ENCODE measurements at regions of chr1 and their contacts with region 1.

Region 1: DNA sequence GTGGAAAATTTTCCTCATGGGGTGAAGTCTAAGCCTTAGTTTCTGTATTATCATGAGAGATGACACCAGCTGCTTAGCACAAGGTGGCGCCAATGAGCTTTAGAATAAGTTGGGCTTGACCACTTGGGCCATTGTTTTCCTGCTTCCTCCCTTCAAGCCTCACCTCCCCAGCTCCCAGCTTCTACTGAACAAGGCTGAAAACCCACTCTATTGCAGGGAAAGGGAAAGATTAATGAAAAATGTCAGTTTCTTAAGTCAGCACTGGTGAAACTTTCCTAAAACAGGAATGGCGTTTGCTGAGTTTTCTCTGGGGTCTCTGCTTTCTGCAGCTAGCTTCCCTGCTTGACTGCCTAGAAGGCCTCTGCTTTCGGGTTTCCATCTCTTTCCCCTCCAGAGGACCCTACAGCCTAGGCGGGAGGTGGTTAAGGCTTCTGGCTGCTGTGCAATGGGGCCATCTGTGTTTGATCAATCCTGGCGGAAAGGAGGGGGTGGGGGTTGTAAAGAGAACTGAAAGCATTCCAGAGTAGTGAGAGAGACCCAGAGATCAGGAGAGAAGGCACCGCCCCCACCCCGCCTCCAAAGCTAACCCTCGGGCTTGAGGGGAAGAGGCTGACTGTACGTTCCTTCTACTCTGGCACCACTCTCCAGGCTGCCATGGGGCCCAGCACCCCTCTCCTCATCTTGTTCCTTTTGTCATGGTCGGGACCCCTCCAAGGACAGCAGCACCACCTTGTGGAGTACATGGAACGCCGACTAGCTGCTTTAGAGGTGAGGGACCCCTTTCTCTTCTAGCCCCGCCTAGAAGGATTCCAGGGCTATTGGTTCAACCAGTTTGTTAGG is at the start of gene OLFML3:
- DNase-seq: peak; percentile 89
- H3K4me3 Mint-ChIP-seq: no peak within 1 kb of the TSS
- H3K27ac Mint-ChIP-seq: no peak within 1 kb of the TSS
- H3K4me1 Mint-ChIP-seq: peaks cover 29% of the 10 kb centered on the region
- H3K27me3 Mint-ChIP-seq: no peaks in the 10 kb centered on the region
- CTCF ChIP-seq: peak; percentile 53
- total RNA-seq, gene OLFML3: 0.20 and 0.30 TPM in 2 replicates

Region 2: DNA sequence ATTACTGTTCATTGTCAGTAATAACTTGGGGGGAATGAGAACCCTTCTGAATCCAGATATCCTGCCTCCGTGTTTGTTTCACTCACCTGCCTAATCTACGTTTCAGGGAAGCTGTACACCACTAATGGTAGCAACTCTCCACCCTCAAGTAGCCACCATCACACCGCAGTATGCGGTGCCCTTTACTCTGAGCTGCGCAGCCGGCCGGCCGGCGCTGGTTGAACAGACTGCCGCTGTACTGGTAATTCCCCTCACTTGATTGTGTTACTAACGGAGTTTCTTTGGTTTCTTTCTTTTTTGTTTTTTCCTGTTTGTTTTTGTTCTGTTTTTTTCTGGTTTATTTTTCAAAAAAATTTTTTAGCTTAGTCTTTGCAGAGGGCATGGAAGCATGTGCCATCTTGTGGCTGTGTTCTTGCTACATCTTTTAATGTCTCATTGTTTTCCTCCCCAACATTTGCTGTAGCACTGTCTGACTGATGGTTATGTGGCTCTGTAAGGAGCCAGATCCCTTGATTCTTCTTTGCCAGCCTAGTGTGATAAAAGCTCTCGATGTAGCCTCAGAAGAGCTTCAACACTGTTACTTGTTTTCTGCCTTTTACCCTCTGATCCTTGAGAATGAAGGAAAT is 15.7 kb before region 1 on chr1:
- CTCF ChIA-PET with region 1: interaction called, 22 read pairs
- POLR2A ChIA-PET with region 1: interaction called, 4 read pairs
- intact Hi-C with region 1: no loop called
- DNase-seq: no peak
- H3K4me3 Mint-ChIP-seq: no peak overlapping the region
- H3K27ac Mint-ChIP-seq: no peak overlapping the region
- H3K4me1 Mint-ChIP-seq: no peaks in the 10 kb centered on the region
- H3K27me3 Mint-ChIP-seq: no peaks in the 10 kb centered on the region
- CTCF ChIP-seq: no peak

Region 3: GRCh38 chr1:114033216-114033706 is 54.2 kb after region 1 on chr1:
- CTCF ChIA-PET with region 1: interaction called, 4 read pairs
- POLR2A ChIA-PET with region 1: no interaction called
- intact Hi-C with region 1: loop called (anchors 1 kb)
- DNase-seq: peak; percentile 27
- H3K4me3 Mint-ChIP-seq: no peak overlapping the region
- H3K27ac Mint-ChIP-seq: no peak overlapping the region
- H3K4me1 Mint-ChIP-seq: no peaks in the 10 kb centered on the region
- H3K27me3 Mint-ChIP-seq: no peaks in the 10 kb centered on the region
- CTCF ChIP-seq: peak; percentile 36

Region 4: DNA sequence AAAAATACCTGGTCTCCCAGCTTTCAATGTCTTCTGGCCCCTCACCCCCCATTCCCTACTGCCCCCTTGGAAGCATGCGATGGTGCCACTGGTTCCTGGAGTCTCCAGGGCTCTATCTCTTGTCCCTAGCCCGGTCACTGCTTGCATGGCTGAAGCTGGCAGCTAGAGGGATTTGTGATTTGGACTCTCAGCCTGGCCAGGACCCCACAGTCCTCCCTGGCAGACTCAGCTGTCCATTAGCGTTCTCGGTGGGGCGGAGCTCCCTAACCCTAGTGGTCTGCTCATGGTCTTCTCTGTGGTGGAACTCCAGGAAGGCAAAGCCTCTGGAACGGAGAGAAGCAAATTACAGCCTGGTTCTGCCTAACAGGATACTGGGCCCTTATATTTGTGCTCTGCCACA is 74.5 kb after region 1 on chr1:
- CTCF ChIA-PET with region 1: no interaction called
- POLR2A ChIA-PET with region 1: no interaction called
- intact Hi-C with region 1: no loop called
- DNase-seq: no peak
- H3K4me3 Mint-ChIP-seq: no peak overlapping the region
- H3K27ac Mint-ChIP-seq: no peak overlapping the region
- H3K4me1 Mint-ChIP-seq: no peaks in the 10 kb centered on the region
- H3K27me3 Mint-ChIP-seq: peaks cover 34% of the 10 kb centered on the region
- CTCF ChIP-seq: no peak

Region 5: GRCh38 chr1:114131526-114132220 is 152.6 kb after region 1 on chr1:
- CTCF ChIA-PET with region 1: interaction called, 5 read pairs
- POLR2A ChIA-PET with region 1: interaction called, 3 read pairs
- intact Hi-C with region 1: loop called (anchors 2 kb)
- DNase-seq: peak; percentile 24
- H3K4me3 Mint-ChIP-seq: no peak overlapping the region
- H3K27ac Mint-ChIP-seq: no peak overlapping the region
- H3K4me1 Mint-ChIP-seq: no peaks in the 10 kb centered on the region
- H3K27me3 Mint-ChIP-seq: peaks cover 68% of the 10 kb centered on the region
- CTCF ChIP-seq: no peak

Region 6: DNA sequence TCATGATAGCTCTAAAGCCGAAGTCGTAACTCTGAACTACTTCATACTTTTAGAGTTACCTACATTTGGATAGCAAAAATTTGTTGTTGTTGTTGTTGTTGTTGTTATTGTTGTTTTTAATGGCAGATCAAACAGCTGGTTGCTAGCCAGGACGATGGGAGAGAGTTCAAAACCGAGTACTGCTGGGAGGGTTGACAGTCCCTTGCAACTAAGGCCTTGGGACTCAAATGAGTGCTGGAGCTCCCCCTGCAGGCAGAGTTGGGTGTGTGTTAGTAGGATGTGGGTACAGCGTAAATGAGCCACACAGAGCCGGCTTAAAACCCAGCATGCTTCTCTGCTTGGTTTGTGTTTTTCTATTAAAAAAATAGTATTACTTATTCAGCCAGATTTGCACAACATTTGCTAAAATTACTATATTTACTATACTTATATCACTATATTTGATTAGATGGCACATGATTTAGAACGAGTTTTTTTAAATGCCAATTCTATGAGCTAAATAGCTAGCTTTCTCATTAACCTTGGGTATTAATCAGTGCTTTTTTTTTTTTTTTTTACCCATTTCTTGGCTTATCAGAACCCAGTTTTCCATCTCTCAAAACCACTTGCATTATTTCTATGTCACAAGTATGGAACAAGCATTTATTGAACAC is 303.8 kb after region 1 on chr1:
- CTCF ChIA-PET with region 1: interaction called, 176 read pairs
- POLR2A ChIA-PET with region 1: interaction called, 9 read pairs
- intact Hi-C with region 1: loop called (anchors 1 kb)
- DNase-seq: peak; percentile 93
- H3K4me3 Mint-ChIP-seq: no peak overlapping the region
- H3K27ac Mint-ChIP-seq: no peak overlapping the region
- H3K4me1 Mint-ChIP-seq: no peaks in the 10 kb centered on the region
- H3K27me3 Mint-ChIP-seq: peaks cover 19% of the 10 kb centered on the region
- CTCF ChIP-seq: peak; percentile 74

Region 7: GRCh38 chr1:114558544-114558943 is 579.5 kb after region 1 on chr1:
- CTCF ChIA-PET with region 1: no interaction called
- POLR2A ChIA-PET with region 1: no interaction called
- intact Hi-C with region 1: loop called (anchors 1 kb)
- DNase-seq: peak; percentile 24
- H3K4me3 Mint-ChIP-seq: no peak overlapping the region
- H3K27ac Mint-ChIP-seq: no peak overlapping the region
- H3K4me1 Mint-ChIP-seq: no peaks in the 10 kb centered on the region
- H3K27me3 Mint-ChIP-seq: no peaks in the 10 kb centered on the region
- CTCF ChIP-seq: peak; percentile 46